Heart left ventricle (tissue), 16 donors: ENCODE measurements at regions of chr3 and their contacts with region 1.

Region 1: GRCh38 chr3:150146991-150147761 is 176.5 kb upstream of the PFN2 start:
- DNase-seq: peak in 1 of 5 donors; percentile 34
- ATAC-seq: peak in 3 of 4 donors; percentile 19 to 54 (median 37)
- H3K4me3 ChIP-seq: no peak overlapping the region
- H3K27ac ChIP-seq: peak overlapping the region in 2 of 12 donors; percentile 55 to 68
- H3K4me1 ChIP-seq: peaks cover 0 to 17% (median 2%) of the 10 kb centered on the region in 12 donors
- H3K27me3 ChIP-seq: no peaks in the 10 kb centered on the region
- CTCF ChIP-seq: no peak
- POLR2A ChIP-seq: no peak

Region 2: DNA sequence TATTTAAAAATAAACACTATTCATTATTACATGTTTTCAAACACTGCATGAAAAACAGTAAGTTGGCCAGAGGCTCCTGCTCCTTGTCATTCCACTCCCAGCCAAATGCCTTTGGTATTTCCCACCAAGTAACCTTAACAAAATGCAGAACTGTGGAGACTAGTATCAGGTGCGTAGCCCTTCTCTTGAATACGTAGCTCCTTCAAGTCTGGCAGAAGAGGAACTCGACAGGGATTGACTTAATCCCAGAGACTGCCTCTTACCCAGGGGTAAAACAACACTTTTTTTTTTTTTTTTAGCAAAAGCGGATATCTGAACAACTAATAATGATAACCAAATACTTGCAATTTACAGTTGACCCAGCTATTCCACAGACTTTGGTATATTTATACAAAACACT is 395.6 kb before region 1 on chr3:
- intact Hi-C with region 1: no loop called
- DNase-seq: no peak
- ATAC-seq: no peak
- H3K4me3 ChIP-seq: peak overlapping the region; percentile 65 to 94 (median 82)
- H3K27ac ChIP-seq: peak overlapping the region in 6 of 12 donors; percentile 65 to 81 (median 71)
- H3K4me1 ChIP-seq: peaks cover 0 to 19% (median 9%) of the 10 kb centered on the region in 12 donors
- H3K27me3 ChIP-seq: no peaks in the 10 kb centered on the region
- CTCF ChIP-seq: no peak
- POLR2A ChIP-seq: no peak

Region 3: DNA sequence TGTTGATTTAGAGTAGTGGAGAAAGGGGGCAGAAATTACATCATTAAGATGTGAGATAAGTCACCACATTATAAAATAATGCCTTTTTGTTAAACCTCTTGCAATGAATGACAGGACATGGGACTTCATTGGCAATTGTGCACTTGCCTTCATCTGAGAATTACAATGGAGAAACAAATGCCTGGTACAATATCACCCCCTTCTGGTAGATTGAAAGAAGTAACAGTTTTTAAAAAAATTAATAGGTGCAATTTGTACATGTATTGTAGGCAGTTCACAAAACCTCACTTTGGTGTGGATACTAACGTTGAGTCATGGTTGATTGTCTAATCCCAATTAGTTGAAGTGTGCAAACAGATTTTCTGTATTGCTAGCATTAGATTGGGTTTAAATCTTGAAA is 1135.7 kb after region 1 on chr3:
- intact Hi-C with region 1: loop called in 1 of 10 experiments (anchors 5 kb)
- DNase-seq: no peak
- ATAC-seq: peak in 3 of 4 donors; percentile 54 to 73 (median 63)
- H3K4me3 ChIP-seq: no peak overlapping the region
- H3K27ac ChIP-seq: peak overlapping the region in 6 of 12 donors; percentile 6 to 74 (median 46)
- H3K4me1 ChIP-seq: peaks cover 0 to 35% (median 0%) of the 10 kb centered on the region in 12 donors
- H3K27me3 ChIP-seq: no peaks in the 10 kb centered on the region
- CTCF ChIP-seq: peak; percentile 48 to 81 (median 68)
- POLR2A ChIP-seq: no peak